H1 (cell line): ENCODE measurements at regions of chr6 and their contacts with region 1.

Region 1: DNA sequence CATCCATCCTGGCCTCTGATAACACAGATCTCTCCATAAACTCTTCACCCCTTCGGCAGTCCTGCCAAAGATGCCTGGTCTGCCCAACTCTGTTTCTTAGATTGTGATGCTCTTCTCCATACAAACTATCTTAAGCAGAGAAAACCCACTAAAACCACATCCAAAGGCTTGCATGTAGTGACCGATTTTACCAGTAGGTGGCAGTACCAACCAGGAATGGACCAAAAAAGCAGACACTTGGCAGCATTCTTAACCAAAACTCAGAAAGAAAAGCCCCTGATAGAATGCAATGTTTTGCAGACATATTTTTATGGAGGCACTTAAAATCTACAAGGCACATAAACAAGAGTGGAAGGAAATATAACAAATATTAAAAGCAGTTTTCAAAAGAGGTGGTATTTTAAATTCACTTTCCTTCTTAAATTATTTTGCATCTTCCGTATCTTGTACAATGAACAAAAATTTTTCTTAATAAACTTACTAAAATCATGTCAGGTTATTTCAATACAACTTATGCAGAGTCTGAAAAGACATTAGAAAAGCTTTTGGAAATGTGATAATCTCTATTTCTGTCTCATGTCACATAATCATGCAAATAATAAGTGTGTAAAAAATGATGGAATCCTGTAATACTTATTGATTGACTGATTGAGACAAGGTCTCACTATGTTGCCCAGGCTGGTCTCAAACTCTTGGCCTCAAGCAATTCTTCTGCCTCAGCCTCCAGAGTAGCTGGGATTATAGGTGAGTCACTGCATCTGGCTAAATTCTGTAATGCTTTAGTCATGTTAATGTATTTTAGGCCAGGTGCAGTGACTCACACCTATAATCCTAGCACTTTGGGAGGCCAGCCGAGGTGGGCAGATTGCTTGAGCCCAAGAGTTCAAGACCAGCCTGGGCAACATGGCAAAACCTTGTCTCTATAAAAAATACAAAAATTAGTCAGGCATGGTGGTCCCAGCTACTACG is 29.4 kb downstream of the LRP11 start:
- DNase-seq: peak in 1 of 2 experiments; percentile 91
- H3K4me3 ChIP-seq: no peak overlapping the region
- H3K27ac ChIP-seq: no peak overlapping the region
- H3K4me1 ChIP-seq: no peaks in the 10 kb centered on the region
- H3K27me3 ChIP-seq: no peaks in the 10 kb centered on the region
- CTCF ChIP-seq: peak in 2 of 3 experiments; percentile 84 to 85; a peak in 3 of 4 replicates
- EP300 ChIP-seq: no peak
- POLR2A ChIP-seq: no peak
- RAD21 ChIP-seq: peak; percentile 82 to 88

Region 2: GRCh38 chr6:149823013-149823412 is 11.8 kb before region 1 on chr6:
- CTCF ChIA-PET with region 1: interaction called, 195 read pairs
- POLR2A ChIA-PET with region 1: interaction called, 3 read pairs
- DNase-seq: no peak
- H3K4me3 ChIP-seq: no peak overlapping the region
- H3K27ac ChIP-seq: no peak overlapping the region
- H3K4me1 ChIP-seq: no peaks in the 10 kb centered on the region
- H3K27me3 ChIP-seq: no peaks in the 10 kb centered on the region
- CTCF ChIP-seq: peak in 1 of 3 experiments; percentile 28; a peak in 1 of 4 replicates
- EP300 ChIP-seq: no peak
- POLR2A ChIP-seq: no peak
- RAD21 ChIP-seq: 0 out of 4 replicates have a peak, but pooled peaks of 1 of the 2 experiments have one; percentile 12

Region 3: DNA sequence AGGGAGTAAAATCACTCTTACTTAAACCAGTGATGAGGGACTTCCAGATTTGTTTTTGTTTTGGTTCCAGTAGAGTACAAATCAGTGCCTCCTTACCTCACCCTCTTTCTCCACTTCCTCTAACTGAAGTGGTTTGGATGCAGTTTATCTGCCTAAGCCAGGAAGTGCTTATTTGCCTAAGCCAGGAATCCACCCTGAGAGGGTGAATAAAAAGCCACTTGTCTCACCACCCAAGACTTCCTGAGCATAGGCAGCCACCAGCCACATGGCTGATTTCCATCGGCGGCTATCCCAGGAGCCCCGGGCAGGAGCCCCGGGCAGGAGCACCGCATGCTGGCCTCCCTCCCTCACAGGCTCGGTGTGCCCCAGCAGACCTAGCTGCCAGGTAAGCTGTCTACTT is 17.4 kb after region 1 on chr6:
- CTCF ChIA-PET with region 1: interaction called, 195 read pairs
- POLR2A ChIA-PET with region 1: no interaction called
- DNase-seq: no peak
- H3K4me3 ChIP-seq: no peak overlapping the region
- H3K27ac ChIP-seq: no peak overlapping the region
- H3K4me1 ChIP-seq: peaks cover 0 to 7% (median 0%) of the 10 kb centered on the region in 4 experiments; a peak in 4 of 7 replicates
- H3K27me3 ChIP-seq: no peaks in the 10 kb centered on the region
- CTCF ChIP-seq: no peak
- EP300 ChIP-seq: no peak
- POLR2A ChIP-seq: no peak
- RAD21 ChIP-seq: no peak

Region 4: GRCh38 chr6:149903938-149904611 is 69.3 kb after region 1 on chr6:
- CTCF ChIA-PET with region 1: interaction called, 26 read pairs
- POLR2A ChIA-PET with region 1: no interaction called
- DNase-seq: no peak
- H3K4me3 ChIP-seq: no peak overlapping the region
- H3K27ac ChIP-seq: no peak overlapping the region
- H3K4me1 ChIP-seq: no peaks in the 10 kb centered on the region
- H3K27me3 ChIP-seq: no peaks in the 10 kb centered on the region
- CTCF ChIP-seq: peak in 1 of 3 experiments; percentile 14; a peak in 1 of 4 replicates
- EP300 ChIP-seq: no peak
- POLR2A ChIP-seq: no peak
- RAD21 ChIP-seq: no peak

Region 5: GRCh38 chr6:149925974-149926777 is 91.4 kb after region 1 on chr6:
- CTCF ChIA-PET with region 1: interaction called, 27 read pairs
- POLR2A ChIA-PET with region 1: no interaction called
- DNase-seq: peak in 1 of 2 experiments; percentile 96
- H3K4me3 ChIP-seq: peak overlapping the region; percentile 13 to 64 (median 56); a peak in 7 of 8 replicates
- H3K27ac ChIP-seq: no peak overlapping the region
- H3K4me1 ChIP-seq: peaks cover 0 to 5% (median 0%) of the 10 kb centered on the region in 4 experiments; a peak in 2 of 7 replicates
- H3K27me3 ChIP-seq: peaks cover 37 to 53% (median 50%) of the 10 kb centered on the region in 4 experiments
- CTCF ChIP-seq: peak; percentile 86 to 92 (median 91)
- EP300 ChIP-seq: no peak
- POLR2A ChIP-seq: no peak
- RAD21 ChIP-seq: peak; percentile 89